Activated T-helper 2 cell treated with anti-CD3 and anti-CD28 coated beads, Interferon-gamma antibody, Interleukin-2, Interleukin-4, amounts not matched to agents 10 μg/mL and 5 μg/mL and 100 μg/mL, durations not matched to agents 14 hours and 24 hours and 36 hours (primary cell): ENCODE measurements at regions of chr10 and their contacts with region 1.

Region 1: DNA sequence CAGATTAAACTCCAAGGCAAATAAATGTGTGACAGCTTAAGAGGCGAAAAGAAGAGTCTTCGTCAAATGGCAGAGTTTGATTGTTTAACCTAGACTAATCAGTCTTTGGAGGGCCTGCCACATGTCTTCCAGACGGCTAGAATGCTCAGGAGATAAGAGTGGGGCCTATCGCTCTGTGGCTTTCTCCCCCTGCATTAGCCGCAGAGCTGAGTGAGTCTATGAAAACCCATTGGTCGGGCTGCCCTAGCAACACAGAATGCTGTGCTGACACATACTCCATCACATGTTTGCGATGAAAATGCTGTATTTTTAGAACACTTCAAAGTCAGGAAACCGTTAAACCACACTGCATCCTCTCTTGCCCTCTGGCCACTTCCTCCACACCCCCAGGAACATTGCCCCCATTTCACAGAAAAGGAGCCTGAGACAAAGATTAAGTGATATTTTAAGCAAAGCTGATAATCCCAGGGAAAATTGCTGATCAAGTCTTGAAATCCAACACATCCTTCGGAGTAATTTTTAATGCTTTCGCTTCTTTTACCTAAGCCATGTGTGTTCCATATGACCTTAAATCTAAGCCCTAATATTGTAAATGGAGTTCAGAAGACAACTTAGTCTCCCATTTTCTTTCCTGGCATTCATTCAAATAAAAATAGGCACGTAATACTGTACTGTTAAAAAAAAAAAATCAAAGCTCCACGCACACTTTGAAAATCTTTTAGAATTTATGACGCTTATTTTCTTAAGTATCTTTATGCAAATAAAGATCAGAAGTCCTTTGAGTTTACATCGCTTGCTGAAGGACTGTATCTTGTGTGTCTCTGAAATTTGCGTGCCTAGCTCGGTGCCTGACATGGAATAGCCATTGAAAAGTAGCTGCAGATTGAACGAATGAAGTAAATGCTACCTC is 161.2 kb downstream of the CELF2 start:
- DNase-seq: peak; percentile 89
- H3K4me3 Mint-ChIP-seq: peak overlapping the region; percentile 89
- H3K27ac Mint-ChIP-seq: no peak overlapping the region
- H3K4me1 Mint-ChIP-seq: peaks cover 95% of the 10 kb centered on the region
- H3K27me3 Mint-ChIP-seq: no peaks in the 10 kb centered on the region

Region 2: GRCh38 chr10:11145495-11145855 is 33.4 kb before region 1 on chr10:
- intact Hi-C with region 1: loop called (anchors 5 kb)
- DNase-seq: peak; percentile 69
- H3K4me3 Mint-ChIP-seq: peak overlapping the region; percentile 77
- H3K27ac Mint-ChIP-seq: peak overlapping the region; percentile 98
- H3K4me1 Mint-ChIP-seq: peaks cover 90% of the 10 kb centered on the region
- H3K27me3 Mint-ChIP-seq: no peaks in the 10 kb centered on the region

Region 3: GRCh38 chr10:11165591-11166543 is 13.0 kb before region 1 on chr10:
- intact Hi-C with region 1: loop called (anchors 1 kb)
- DNase-seq: peak; percentile 73
- H3K4me3 Mint-ChIP-seq: peak overlapping the region; percentile 98
- H3K27ac Mint-ChIP-seq: peak overlapping the region; percentile 98
- H3K4me1 Mint-ChIP-seq: peaks cover 37% of the 10 kb centered on the region
- H3K27me3 Mint-ChIP-seq: no peaks in the 10 kb centered on the region

Region 4: GRCh38 chr10:11197266-11197712 is 18.4 kb after region 1 on chr10:
- intact Hi-C with region 1: loop called (anchors 1 kb)
- DNase-seq: no peak
- H3K4me3 Mint-ChIP-seq: no peak overlapping the region
- H3K27ac Mint-ChIP-seq: peak overlapping the region; percentile 71
- H3K4me1 Mint-ChIP-seq: peaks cover 84% of the 10 kb centered on the region
- H3K27me3 Mint-ChIP-seq: no peaks in the 10 kb centered on the region

Region 5: DNA sequence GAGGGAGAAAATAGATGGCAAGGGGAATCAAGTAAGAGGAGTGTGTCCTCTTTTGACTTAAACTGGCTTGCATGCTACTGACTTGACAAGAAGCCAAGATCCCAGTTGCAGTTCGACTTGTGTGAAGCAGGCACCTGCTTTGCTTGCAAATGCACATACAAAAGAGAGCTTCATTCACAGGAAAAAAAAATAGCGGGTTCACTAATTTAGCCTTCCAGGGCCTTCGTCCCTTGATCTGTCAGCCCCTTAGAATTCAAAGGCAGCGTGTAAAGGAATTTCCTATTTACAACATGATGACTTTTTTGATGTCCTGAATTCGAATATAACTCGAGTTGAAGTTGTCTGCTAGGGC is 30.9 kb after region 1 on chr10:
- intact Hi-C with region 1: loop called (anchors 1 kb)
- DNase-seq: no peak
- H3K4me3 Mint-ChIP-seq: peak overlapping the region; percentile 79
- H3K27ac Mint-ChIP-seq: peak overlapping the region; percentile 99
- H3K4me1 Mint-ChIP-seq: peaks cover 90% of the 10 kb centered on the region
- H3K27me3 Mint-ChIP-seq: no peaks in the 10 kb centered on the region

Region 6: DNA sequence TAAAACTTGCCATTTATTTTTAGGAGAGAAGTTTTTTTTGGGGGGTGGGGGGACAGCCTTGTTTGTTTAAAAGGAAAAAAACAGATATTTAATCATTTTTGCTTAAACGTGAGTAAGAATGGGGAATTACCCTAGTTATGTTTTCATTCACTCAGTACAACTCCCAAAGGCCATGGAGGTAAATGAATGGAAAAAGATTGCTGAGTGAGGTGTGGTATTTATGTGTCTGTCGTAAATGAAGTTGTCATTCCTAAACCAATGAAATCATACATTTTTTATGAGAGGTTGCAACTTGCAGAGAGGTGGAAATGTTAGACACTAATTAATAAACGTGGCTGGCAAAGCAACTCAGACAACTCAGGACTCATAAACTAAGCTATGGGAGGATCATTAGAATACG is 56.9 kb after region 1 on chr10:
- intact Hi-C with region 1: loop called (anchors 1 kb)
- DNase-seq: no peak
- H3K4me3 Mint-ChIP-seq: peak overlapping the region; percentile 58
- H3K27ac Mint-ChIP-seq: peak overlapping the region; percentile 98
- H3K4me1 Mint-ChIP-seq: peaks cover 84% of the 10 kb centered on the region
- H3K27me3 Mint-ChIP-seq: no peaks in the 10 kb centered on the region

Region 7: GRCh38 chr10:11270135-11270857 is 91.4 kb after region 1 on chr10:
- intact Hi-C with region 1: loop called (anchors 1 kb)
- DNase-seq: peak; percentile 45
- H3K4me3 Mint-ChIP-seq: no peak overlapping the region
- H3K27ac Mint-ChIP-seq: peak overlapping the region; percentile 73
- H3K4me1 Mint-ChIP-seq: peaks cover 64% of the 10 kb centered on the region
- H3K27me3 Mint-ChIP-seq: no peaks in the 10 kb centered on the region

Region 8: DNA sequence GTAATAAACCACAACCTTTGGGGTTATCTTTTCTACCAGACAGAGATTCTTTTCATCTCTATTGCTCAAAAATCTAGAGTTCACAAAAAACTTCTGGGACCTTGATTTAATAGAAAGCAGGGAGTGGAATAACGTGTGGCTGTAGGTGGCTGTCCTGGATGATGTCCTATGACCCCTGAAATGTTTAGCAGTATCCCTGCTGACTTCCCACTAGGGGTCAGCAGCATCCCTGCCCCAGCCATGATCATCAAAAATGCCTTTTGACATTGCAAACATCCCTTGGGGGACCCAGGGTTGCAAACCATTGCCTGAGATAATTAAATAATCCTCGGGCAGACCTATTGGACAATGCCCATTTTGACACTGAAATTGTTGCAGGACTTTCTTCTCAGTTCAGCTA is 255.5 kb after region 1 on chr10:
- intact Hi-C with region 1: no loop called
- DNase-seq: no peak
- H3K4me3 Mint-ChIP-seq: no peak overlapping the region
- H3K27ac Mint-ChIP-seq: no peak overlapping the region
- H3K4me1 Mint-ChIP-seq: no peaks in the 10 kb centered on the region
- H3K27me3 Mint-ChIP-seq: no peaks in the 10 kb centered on the region